MCF 10A (cell line): ENCODE measurements at regions of chr4 and their contacts with region 1.

Region 1: DNA sequence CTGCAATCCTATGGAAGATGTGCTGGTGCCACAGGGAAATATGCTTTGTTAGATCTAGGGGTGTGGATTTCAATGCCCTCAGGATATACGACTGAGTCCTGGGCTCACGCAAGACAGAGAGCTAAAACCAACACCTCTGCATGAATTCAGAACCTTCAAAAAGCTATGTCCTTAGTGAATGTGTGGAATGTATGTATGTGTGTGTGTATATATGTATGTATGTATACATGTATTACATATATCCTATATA is 36.6 kb upstream of the RAPGEF2 start:
- DNase-seq: no peak
- H3K4me3 Mint-ChIP-seq: no peak overlapping the region
- H3K27ac Mint-ChIP-seq: no peak overlapping the region
- H3K4me1 Mint-ChIP-seq: peaks cover 18% of the 10 kb centered on the region
- H3K27me3 Mint-ChIP-seq: no peaks in the 10 kb centered on the region
- CTCF ChIP-seq: no peak

Region 2: DNA sequence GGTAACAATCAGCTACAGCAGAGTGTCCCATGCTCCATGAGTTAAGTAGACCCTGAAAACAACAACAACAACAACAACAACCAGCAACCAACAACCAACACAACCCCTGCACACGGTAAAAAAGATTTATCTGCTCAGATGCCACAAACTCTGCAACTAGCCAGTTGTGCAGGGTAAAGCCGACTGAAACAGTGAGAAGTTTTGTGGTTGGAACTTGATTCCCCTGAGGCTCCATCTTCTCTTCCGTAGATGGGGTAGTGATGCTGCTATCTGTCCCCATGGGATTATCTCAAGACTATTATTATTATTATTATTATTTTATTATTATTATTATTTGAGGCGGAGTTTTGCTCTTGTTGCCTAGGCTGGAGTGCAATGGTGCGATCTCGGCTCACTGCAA is 13.9 kb before region 1 on chr4:
- CTCF ChIA-PET with region 1: interaction called, 10 read pairs
- POLR2A ChIA-PET with region 1: interaction called, 3 read pairs
- intact Hi-C with region 1: no loop called
- DNase-seq: no peak
- H3K4me3 Mint-ChIP-seq: no peak overlapping the region
- H3K27ac Mint-ChIP-seq: no peak overlapping the region
- H3K4me1 Mint-ChIP-seq: no peaks in the 10 kb centered on the region
- H3K27me3 Mint-ChIP-seq: peaks cover 10% of the 10 kb centered on the region
- CTCF ChIP-seq: no peak